PC-9 (cell line): ENCODE measurements at regions of chr3 and their contacts with region 1.

Region 1: DNA sequence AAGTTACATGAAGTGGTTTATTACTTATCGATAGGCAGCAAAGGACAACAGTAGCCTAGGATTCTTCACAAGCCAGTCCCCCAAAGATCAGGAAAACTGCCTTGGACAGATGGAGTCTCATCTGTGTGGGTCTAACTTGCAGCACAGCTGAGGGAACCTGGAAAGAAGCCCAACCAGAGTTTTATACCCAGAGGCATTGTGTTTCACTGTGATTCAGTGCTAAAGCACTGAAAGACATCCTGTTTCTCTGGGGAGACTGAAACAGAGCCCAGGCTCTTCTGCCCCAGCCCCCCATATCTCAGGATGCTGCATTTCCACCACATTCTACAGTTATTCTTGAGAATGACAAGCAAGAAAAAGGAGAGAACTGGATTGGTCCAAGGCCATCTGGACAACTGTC is 48.2 kb upstream of the PYDC2 start:
- DNase-seq: peak in 1 of 2 experiments; percentile 41
- H3K4me3 ChIP-seq: no peak overlapping the region
- H3K27ac ChIP-seq: no peak overlapping the region
- H3K4me1 ChIP-seq: peaks cover 8% of the 10 kb centered on the region
- H3K27me3 ChIP-seq: no peaks in the 10 kb centered on the region
- CTCF ChIP-seq: no peak

Region 2: GRCh38 chr3:190811775-190812480 is 600.8 kb before region 1 on chr3:
- CTCF ChIA-PET with region 1: no interaction called
- POLR2A ChIA-PET with region 1: no interaction called
- intact Hi-C with region 1: loop called (anchors 5 kb)
- DNase-seq: peak in 1 of 2 experiments; percentile 41
- H3K4me3 ChIP-seq: no peak overlapping the region
- H3K27ac ChIP-seq: no peak overlapping the region
- H3K4me1 ChIP-seq: no peaks in the 10 kb centered on the region
- H3K27me3 ChIP-seq: no peaks in the 10 kb centered on the region
- CTCF ChIP-seq: peak; percentile 80

Region 3: DNA sequence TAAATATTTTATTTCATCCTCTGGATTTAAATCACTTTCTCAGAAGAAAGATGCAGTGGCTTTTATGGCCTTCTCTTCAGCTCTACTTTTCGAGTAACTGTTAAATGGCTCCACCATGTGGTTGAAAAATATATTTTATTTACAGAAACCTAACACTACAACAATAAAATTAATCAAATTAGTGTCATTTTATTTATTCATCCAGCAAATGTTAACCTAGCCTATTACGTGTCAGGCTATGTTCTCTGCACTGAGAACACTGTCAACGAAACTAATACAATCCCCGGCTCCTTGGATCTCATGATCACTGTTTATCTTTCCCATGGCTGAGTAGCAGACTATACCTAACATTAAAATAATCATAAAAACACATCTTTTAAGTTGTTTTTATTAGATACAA is 361.7 kb before region 1 on chr3:
- CTCF ChIA-PET with region 1: no interaction called
- POLR2A ChIA-PET with region 1: no interaction called
- intact Hi-C with region 1: loop called (anchors 10 kb)
- DNase-seq: peak in 1 of 2 experiments; percentile 58
- H3K4me3 ChIP-seq: no peak overlapping the region
- H3K27ac ChIP-seq: no peak overlapping the region
- H3K4me1 ChIP-seq: no peaks in the 10 kb centered on the region
- H3K27me3 ChIP-seq: no peaks in the 10 kb centered on the region
- CTCF ChIP-seq: peak; percentile 87

Region 4: DNA sequence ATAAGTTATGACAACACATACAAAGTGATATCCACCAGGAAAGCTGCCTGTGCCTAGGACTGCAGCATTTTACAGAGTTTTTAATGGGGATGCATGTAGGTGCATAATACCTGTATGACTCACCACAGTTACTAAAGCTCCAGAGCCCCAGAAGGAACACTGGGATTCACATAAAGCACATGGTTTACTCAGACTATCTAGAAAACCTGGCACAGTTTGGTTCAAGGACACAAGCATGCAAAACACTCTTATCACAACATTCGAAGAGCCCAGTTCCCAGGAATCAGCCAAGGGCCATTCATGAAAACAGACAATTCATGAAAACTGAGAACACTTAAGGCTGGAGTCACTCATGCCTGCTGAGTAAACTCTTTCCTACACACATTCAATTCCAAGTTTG is 309.2 kb after region 1 on chr3:
- CTCF ChIA-PET with region 1: no interaction called
- POLR2A ChIA-PET with region 1: no interaction called
- intact Hi-C with region 1: no loop called
- DNase-seq: no peak
- H3K4me3 ChIP-seq: no peak overlapping the region
- H3K27ac ChIP-seq: no peak overlapping the region
- H3K4me1 ChIP-seq: no peaks in the 10 kb centered on the region
- H3K27me3 ChIP-seq: no peaks in the 10 kb centered on the region
- CTCF ChIP-seq: no peak

Region 5: DNA sequence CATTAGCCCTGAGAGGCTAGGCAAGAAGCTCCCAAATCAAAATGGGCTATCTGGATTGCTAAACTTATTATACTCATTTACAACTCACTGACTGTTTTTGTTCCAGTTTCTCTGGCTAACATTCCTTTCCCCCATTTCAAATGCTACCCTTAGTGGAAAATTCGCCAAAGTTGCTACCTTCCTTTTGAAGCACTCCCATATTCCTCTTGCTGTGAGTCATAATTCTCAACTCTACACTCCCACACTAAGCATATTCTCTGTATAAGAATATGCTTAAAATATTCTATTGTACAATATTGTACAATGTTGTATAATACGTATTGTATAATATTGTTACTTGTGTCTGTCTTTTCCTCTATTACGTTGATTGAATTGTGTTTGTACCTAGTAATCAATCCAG is 446.8 kb after region 1 on chr3:
- CTCF ChIA-PET with region 1: no interaction called
- POLR2A ChIA-PET with region 1: no interaction called
- intact Hi-C with region 1: no loop called
- DNase-seq: no peak
- H3K4me3 ChIP-seq: no peak overlapping the region
- H3K27ac ChIP-seq: no peak overlapping the region
- H3K4me1 ChIP-seq: no peaks in the 10 kb centered on the region
- H3K27me3 ChIP-seq: no peaks in the 10 kb centered on the region
- CTCF ChIP-seq: no peak

Region 6: DNA sequence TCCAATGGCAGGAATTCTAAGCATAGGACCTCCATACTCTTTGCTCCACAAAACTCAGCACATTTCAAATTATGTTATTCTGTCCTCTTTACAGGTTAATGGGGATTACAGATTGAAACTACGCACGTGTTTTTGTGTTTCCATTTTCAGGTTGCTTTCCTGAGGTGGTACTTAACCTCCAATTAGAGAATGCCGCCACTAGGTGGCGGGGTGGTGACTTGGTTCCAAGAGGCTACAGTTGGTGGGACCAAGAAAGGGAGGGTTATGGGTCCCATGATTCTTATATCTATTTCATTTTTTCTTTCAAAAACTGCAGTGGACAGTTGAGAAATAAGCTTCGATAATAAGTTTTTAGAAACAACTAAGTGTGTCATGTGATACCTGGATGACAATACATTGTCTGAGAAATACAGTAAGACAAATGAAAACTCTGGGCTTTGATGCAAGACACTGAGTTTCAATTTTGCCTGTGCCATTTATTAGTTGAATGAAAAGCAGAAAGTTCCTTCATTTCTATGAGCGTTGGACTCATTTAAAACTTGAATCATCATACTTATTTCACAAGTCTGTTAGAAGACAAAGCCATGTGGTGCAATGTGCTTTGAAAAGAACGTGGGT is 775.6 kb after region 1 on chr3:
- CTCF ChIA-PET with region 1: no interaction called
- POLR2A ChIA-PET with region 1: no interaction called
- intact Hi-C with region 1: loop called (anchors 10 kb)
- DNase-seq: peak; percentile 39 to 55
- H3K4me3 ChIP-seq: no peak overlapping the region
- H3K27ac ChIP-seq: no peak overlapping the region
- H3K4me1 ChIP-seq: no peaks in the 10 kb centered on the region
- H3K27me3 ChIP-seq: no peaks in the 10 kb centered on the region
- CTCF ChIP-seq: peak; percentile 99

Region 7: GRCh38 chr3:192444096-192444790 is 1031.5 kb after region 1 on chr3:
- CTCF ChIA-PET with region 1: no interaction called
- POLR2A ChIA-PET with region 1: no interaction called
- intact Hi-C with region 1: loop called (anchors 1 kb)
- DNase-seq: peak; percentile 58 to 73
- H3K4me3 ChIP-seq: no peak overlapping the region
- H3K27ac ChIP-seq: no peak overlapping the region
- H3K4me1 ChIP-seq: no peaks in the 10 kb centered on the region
- H3K27me3 ChIP-seq: no peaks in the 10 kb centered on the region
- CTCF ChIP-seq: peak; percentile 100